Natural killer cell (primary cell): ENCODE measurements at regions of chr19 and their contacts with region 1.

Region 1: GRCh38 chr19:40777937-40778705 is at the start of gene RAB4B:
- DNase-seq: peak; percentile 100
- ATAC-seq: peak; percentile 80 to 93 (median 82)
- H3K4me3 ChIP-seq: peak within 1 kb of the TSS; percentile 92
- H3K4me3 Mint-ChIP-seq: peak within 1 kb of the TSS; percentile 97
- H3K27ac ChIP-seq: peak within 1 kb of the TSS; percentile 99
- H3K27ac Mint-ChIP-seq: peak within 1 kb of the TSS; percentile 95 to 96
- H3K4me1 ChIP-seq: peaks cover 26% of the 10 kb centered on the region
- H3K4me1 Mint-ChIP-seq: peaks cover 37 to 51% of the 10 kb centered on the region in 2 donors
- H3K27me3 ChIP-seq: no peaks in the 10 kb centered on the region
- H3K27me3 Mint-ChIP-seq: no peaks in the 10 kb centered on the region
- CTCF ChIP-seq: no peak
- total RNA-seq, gene RAB4B: 97.8 to 99.8 (median 98.6) TPM

Region 2: DNA sequence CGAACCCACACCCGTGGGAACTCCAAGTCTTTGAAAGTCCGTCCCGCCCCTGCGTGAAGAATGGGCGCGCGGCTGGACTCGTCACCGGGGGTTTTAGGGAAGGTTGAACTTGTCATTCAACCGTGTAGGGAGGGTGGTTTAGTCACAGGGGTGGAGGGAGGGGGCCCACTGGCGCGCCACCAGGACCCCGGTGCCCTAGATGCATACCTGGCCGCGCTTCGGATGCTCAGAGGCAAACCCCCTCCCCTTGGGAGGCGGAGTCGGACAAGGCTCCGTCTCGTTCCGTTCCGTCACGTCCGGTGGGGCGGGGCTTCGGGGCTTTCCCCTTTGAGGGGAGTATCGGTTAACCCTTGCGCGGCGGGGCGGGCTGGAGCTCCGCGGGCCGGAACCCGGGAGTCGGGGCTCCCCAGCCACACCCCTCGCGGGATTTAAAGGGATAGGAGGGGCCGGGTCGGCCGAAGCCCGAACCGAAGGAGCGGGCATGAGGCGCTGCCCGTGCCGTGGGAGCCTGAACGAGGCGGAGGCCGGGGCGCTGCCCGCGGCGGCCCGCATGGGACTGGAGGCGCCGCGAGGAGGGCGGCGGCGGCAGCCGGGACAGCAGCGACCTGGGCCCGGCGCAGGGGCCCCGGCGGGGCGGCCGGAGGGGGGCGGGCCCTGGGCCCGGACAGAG is 61.3 kb before region 1 on chr19 and contains the starts of genes COQ8B and ITPKC:
- intact Hi-C with region 1: loop called (anchors 1 kb)
- DNase-seq: peak; percentile 99 to 100
- ATAC-seq: peak; percentile 69 to 91 (median 76)
- H3K4me3 ChIP-seq: peak within 1 kb of the TSS; percentile 83
- H3K4me3 Mint-ChIP-seq: peak within 1 kb of the TSS; percentile 93
- H3K27ac ChIP-seq: peak within 1 kb of the TSS; percentile 92
- H3K27ac Mint-ChIP-seq: peak within 1 kb of the TSS; percentile 99
- H3K4me1 ChIP-seq: peaks cover 64% of the 10 kb centered on the region
- H3K4me1 Mint-ChIP-seq: peaks cover 51 to 66% of the 10 kb centered on the region in 2 donors
- H3K27me3 ChIP-seq: no peaks in the 10 kb centered on the region
- H3K27me3 Mint-ChIP-seq: no peaks in the 10 kb centered on the region
- CTCF ChIP-seq: no peak
- total RNA-seq, gene COQ8B: 31.8 to 46.7 (median 39.6) TPM
- total RNA-seq, gene ITPKC: 8.7 to 11.1 (median 11.0) TPM

Region 3: GRCh38 chr19:40750059-40750873 is 27.9 kb before region 1 on chr19 and contains the start of gene ACTMAP:
- intact Hi-C with region 1: loop called (anchors 1 kb)
- DNase-seq: peak; percentile 100
- ATAC-seq: peak; percentile 87 to 96 (median 88)
- H3K4me3 ChIP-seq: peak within 1 kb of the TSS; percentile 73
- H3K4me3 Mint-ChIP-seq: peak within 1 kb of the TSS; percentile 99
- H3K27ac ChIP-seq: peak within 1 kb of the TSS; percentile 92
- H3K27ac Mint-ChIP-seq: peak within 1 kb of the TSS; percentile 92 to 95
- H3K4me1 ChIP-seq: peaks cover 52% of the 10 kb centered on the region
- H3K4me1 Mint-ChIP-seq: peaks cover 43 to 53% of the 10 kb centered on the region in 2 donors
- H3K27me3 ChIP-seq: no peaks in the 10 kb centered on the region
- H3K27me3 Mint-ChIP-seq: no peaks in the 10 kb centered on the region
- CTCF ChIP-seq: no peak
- total RNA-seq, gene ACTMAP: 5.9 to 9.6 (median 8.2) TPM

Region 4: GRCh38 chr19:40798223-40798996 is 20.3 kb after region 1 on chr19:
- intact Hi-C with region 1: loop called (anchors 1 kb)
- DNase-seq: peak; percentile 100
- ATAC-seq: peak; percentile 82 to 94 (median 86)
- H3K4me3 ChIP-seq: peak overlapping the region; percentile 55
- H3K4me3 Mint-ChIP-seq: peak overlapping the region; percentile 99
- H3K27ac ChIP-seq: peak overlapping the region; percentile 91
- H3K27ac Mint-ChIP-seq: peak overlapping the region; percentile 100
- H3K4me1 ChIP-seq: peaks cover 51% of the 10 kb centered on the region
- H3K4me1 Mint-ChIP-seq: peaks cover 45 to 53% of the 10 kb centered on the region in 2 donors
- H3K27me3 ChIP-seq: no peaks in the 10 kb centered on the region
- H3K27me3 Mint-ChIP-seq: no peaks in the 10 kb centered on the region
- CTCF ChIP-seq: peak; percentile 47

Region 5: GRCh38 chr19:40815223-40815814 is 37.2 kb after region 1 on chr19:
- intact Hi-C with region 1: loop called (anchors 5 kb)
- DNase-seq: no peak
- ATAC-seq: no peak
- H3K4me3 ChIP-seq: no peak overlapping the region
- H3K4me3 Mint-ChIP-seq: no peak overlapping the region
- H3K27ac ChIP-seq: no peak overlapping the region
- H3K27ac Mint-ChIP-seq: peak overlapping the region in 1 of 2 donors; percentile 38
- H3K4me1 ChIP-seq: peaks cover 43% of the 10 kb centered on the region
- H3K4me1 Mint-ChIP-seq: peaks cover 48 to 57% of the 10 kb centered on the region in 2 donors
- H3K27me3 ChIP-seq: no peaks in the 10 kb centered on the region
- H3K27me3 Mint-ChIP-seq: no peaks in the 10 kb centered on the region
- CTCF ChIP-seq: no peak

Region 6: DNA sequence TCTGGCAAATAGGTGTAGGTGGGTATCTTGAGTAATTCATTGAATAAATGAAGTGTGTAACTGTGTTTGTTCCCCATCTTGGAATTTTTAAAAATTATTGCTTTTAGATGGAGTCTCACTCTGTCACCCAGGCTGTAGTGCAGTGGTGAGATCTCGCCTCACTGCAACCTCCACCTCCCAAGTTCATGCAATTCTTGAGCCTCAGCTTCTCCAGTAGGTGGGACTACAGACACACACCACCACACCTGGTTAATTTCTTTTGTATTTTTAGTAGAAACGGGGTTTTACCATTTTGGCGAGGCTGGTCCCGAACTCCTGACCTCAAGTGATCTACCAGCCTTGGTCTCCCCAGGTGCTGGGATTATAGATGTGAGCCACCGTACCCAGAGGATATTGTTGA is 80.0 kb after region 1 on chr19:
- intact Hi-C with region 1: no loop called
- DNase-seq: no peak
- ATAC-seq: no peak
- H3K4me3 ChIP-seq: no peak overlapping the region
- H3K4me3 Mint-ChIP-seq: no peak overlapping the region
- H3K27ac ChIP-seq: no peak overlapping the region
- H3K27ac Mint-ChIP-seq: no peak overlapping the region
- H3K4me1 ChIP-seq: no peaks in the 10 kb centered on the region
- H3K4me1 Mint-ChIP-seq: no peaks in the 10 kb centered on the region
- H3K27me3 ChIP-seq: no peaks in the 10 kb centered on the region
- H3K27me3 Mint-ChIP-seq: no peaks in the 10 kb centered on the region
- CTCF ChIP-seq: no peak